Calu3 (cell line): ENCODE measurements at regions of chr2 and their contacts with region 1.

Region 1: DNA sequence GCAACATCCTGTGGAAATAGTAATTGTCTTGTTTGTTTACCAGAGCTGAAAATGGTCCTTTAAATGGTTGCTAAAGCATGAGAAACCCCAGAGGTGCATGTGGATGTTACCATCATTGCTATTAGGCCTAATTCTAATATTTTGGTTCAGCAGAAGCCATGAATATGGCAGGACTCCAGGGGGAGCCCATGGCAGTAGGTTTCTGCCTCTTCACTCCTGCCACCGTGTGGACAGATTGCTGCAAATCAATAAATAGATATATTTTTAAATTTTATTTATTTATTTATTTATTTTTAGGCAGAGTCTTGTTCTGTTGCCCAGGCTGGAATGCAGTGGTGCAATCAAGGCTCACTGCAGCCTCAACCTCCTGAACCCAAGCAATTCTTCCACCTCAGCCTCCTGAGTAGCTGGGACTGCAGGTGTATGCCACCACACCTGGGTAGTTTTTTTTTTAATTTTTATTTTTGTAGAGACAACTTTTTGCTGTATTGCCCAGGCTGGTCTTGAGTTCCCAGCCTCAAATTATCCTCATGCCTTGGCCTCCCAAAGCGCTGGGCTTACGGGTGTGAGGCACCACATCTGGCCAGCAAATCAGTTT is 54.9 kb upstream of the CAPN13 start:
- DNase-seq: peak; percentile 74
- H3K4me3 Mint-ChIP-seq: no peak overlapping the region
- H3K27ac Mint-ChIP-seq: no peak overlapping the region
- H3K4me1 Mint-ChIP-seq: no peaks in the 10 kb centered on the region
- H3K27me3 Mint-ChIP-seq: peaks cover 20% of the 10 kb centered on the region
- CTCF ChIP-seq: peak; percentile 81

Region 2: GRCh38 chr2:30178618-30179434 is 683.3 kb before region 1 on chr2:
- CTCF ChIA-PET with region 1: no interaction called
- intact Hi-C with region 1: no loop called
- DNase-seq: no peak
- H3K4me3 Mint-ChIP-seq: no peak overlapping the region
- H3K27ac Mint-ChIP-seq: no peak overlapping the region
- H3K4me1 Mint-ChIP-seq: no peaks in the 10 kb centered on the region
- H3K27me3 Mint-ChIP-seq: peaks cover 57% of the 10 kb centered on the region
- CTCF ChIP-seq: no peak

Region 3: DNA sequence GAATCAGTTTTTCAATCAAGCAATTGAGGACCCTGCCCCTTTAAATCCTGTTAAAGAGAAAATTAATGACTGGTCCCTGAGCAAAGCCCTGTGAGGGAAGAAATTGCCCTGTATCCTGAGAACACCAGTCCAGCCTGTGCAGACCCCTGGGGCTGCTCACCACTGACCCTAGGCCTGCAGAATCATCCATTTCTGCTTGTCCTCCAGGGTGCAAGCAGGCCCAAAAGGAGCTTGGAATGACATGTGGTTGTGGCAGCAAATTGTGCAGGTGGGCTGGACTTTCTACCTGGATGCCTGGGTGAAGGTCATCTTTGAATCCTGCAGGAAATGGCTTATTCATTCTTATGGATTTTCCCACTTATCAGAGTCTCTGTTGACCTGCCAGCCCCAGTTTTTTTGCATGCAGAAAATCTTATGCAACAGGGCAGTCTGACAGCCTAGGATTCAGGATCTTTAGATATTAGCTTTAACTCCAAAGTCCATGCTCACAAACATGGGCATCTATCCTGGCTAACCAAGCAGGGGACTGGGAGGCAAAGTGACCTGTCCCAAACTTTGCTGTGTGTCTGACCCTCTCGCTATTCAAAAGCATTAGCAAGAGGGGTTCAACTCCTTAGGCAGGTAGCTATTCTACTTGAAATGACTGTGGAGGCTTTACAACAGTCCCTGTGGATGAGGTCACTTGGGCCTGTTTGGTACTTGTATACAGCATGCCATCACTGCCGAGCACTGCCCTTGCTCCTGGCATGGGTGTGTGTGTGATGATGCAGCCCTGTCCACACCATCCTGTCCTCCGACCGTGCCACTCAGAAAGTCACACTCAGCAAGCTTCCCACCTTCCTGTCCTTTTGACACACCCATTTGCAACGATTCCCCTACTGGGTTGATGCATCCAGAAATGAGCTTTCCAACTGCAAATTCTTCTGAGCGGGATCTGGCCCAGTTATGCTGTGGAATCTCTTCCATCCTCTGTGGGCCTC is 140.2 kb before region 1 on chr2:
- CTCF ChIA-PET with region 1: no interaction called
- intact Hi-C with region 1: no loop called
- DNase-seq: no peak
- H3K4me3 Mint-ChIP-seq: no peak overlapping the region
- H3K27ac Mint-ChIP-seq: no peak overlapping the region
- H3K4me1 Mint-ChIP-seq: no peaks in the 10 kb centered on the region
- H3K27me3 Mint-ChIP-seq: peaks cover 10% of the 10 kb centered on the region
- CTCF ChIP-seq: no peak

Region 4: GRCh38 chr2:31333527-31334183 is 471.5 kb after region 1 on chr2:
- CTCF ChIA-PET with region 1: no interaction called
- intact Hi-C with region 1: loop called (anchors 2 kb)
- DNase-seq: peak; percentile 86
- H3K4me3 Mint-ChIP-seq: no peak overlapping the region
- H3K27ac Mint-ChIP-seq: no peak overlapping the region
- H3K4me1 Mint-ChIP-seq: peaks cover 28% of the 10 kb centered on the region
- H3K27me3 Mint-ChIP-seq: no peaks in the 10 kb centered on the region
- CTCF ChIP-seq: peak; percentile 82